Right ventricle myocardium inferior (tissue), 1 donor: ENCODE measurements at regions of chr11 and their contacts with region 1.

Region 1: GRCh38 chr11:103700622-103701021 is 335.8 kb upstream of the DDI1 start:
- DNase-seq: no peak
- ATAC-seq: peak; percentile 87

Region 2: GRCh38 chr11:103773059-103773458 is 72.4 kb after region 1 on chr11:
- intact Hi-C with region 1: loop called (anchors 10 kb)
- DNase-seq: no peak
- ATAC-seq: peak; percentile 63